Left ventricle myocardium superior (tissue), 1 donor: ENCODE measurements at regions of chr2 and their contacts with region 1.

Region 1: GRCh38 chr2:155368934-155369333 is 670.4 kb downstream of the KCNJ3 start:
- DNase-seq: no peak
- ATAC-seq: no peak

Region 2: GRCh38 chr2:157194097-157194688 is 1825.3 kb after region 1 on chr2:
- intact Hi-C with region 1: loop called (anchors 5 kb)
- DNase-seq: no peak
- ATAC-seq: peak; percentile 33